ENCODE measurements at regions of chr1 and their contacts with region 1.

Region 1: DNA sequence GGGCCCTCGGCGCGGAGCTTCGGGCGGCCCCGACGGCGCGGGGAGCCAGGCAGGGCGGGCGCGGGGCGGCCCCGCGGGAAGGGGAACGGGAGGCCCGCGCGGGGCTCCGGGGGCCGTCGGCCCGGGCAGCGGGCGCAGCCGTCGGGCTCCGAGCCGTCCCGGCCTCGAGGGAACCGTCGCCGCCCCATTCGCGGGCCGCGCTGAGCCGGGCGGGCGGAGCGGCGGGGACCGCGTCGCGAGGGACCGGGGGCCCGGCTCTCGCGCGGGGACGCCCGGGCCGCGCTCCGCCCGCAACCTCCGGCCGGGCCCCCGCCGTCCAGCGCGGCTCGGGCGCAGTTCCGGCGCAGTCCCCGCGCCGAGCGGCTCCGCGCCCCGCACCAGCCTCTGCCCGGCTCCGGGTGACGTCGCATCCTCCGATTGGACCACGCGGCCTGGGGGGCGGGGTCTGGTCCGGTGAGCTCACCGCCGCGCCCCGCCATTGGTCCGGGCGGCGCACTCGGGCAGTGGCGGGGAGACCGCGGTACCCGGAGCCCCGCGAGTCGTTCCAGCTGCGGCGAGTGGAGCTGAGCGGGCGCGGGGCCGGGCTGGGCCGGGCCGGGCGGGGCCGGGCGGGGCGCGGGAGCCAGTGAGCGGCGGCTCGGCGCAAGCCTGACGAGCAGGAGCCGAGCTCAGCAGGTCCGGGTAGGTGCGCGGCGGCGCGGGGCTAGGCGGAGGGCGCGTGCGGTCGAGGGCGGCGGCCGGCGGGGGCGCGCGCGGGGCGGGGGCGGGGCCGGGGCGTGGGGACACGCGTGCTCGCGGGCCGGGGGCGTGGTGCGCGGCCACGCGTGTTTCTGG is 66.7 kb upstream of the VAMP3 start:
- DNase-seq: peak; percentile 95
- ATAC-seq: peak; percentile 88
- H3K4me3 Mint-ChIP-seq: peak overlapping the region; percentile 70; the same call in 1 of the 2 replicates
- H3K27ac Mint-ChIP-seq: no peak overlapping the region
- H3K4me1 Mint-ChIP-seq: peaks cover 16% of the 10 kb centered on the region
- H3K27me3 Mint-ChIP-seq: peaks cover 54% of the 10 kb centered on the region
- CTCF ChIP-seq: no peak

Region 2: DNA sequence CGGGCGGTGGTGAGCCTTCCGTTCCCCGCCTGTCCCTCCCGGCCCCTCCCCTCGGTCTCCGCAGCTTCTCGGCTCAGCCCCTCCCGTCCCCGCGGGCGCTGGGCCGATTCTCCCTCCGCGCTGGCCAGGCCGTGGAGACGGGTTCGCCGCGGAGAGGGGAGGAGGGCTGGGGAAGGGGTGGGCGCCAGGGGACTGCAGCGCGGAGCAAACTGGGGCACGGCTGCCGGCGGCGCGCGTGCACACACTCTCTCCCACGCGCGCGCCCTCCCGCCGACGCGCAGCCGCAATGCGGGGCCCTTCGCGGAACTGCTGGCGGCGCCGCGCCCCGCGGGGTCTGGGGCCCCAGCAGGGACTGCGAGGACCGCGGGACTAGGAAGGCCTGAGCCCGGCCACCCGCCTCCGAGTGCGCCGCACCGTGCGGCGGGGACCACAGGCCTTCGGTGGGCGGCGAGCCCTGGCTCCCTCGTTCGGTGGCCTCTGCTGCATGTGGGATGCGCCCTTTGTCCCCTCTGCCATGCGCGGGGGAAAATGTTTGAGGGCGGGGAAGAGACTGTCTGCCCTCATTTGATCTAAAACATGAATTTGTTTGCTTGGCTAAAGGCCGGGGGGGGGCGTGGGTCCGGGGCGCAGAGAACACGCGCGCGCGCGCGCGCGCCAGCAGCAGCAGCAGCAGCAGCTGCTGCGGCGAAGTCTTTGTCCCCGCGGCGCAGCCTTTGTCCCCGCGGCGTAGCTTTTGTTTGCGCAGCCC is 24.1 kb before region 1 on chr1:
- CTCF ChIA-PET with region 1: interaction called, 12 read pairs
- POLR2A ChIA-PET with region 1: interaction called, 17 read pairs
- DNase-seq: peak; percentile 50
- ATAC-seq: peak; percentile 62
- H3K4me3 Mint-ChIP-seq: peak overlapping the region; percentile 63
- H3K27ac Mint-ChIP-seq: no peak overlapping the region
- H3K4me1 Mint-ChIP-seq: no peaks in the 10 kb centered on the region
- H3K27me3 Mint-ChIP-seq: peaks cover 22% of the 10 kb centered on the region
- CTCF ChIP-seq: no peak

Measured in WTC11 (cell line).